ENCODE measurements at regions of chr17 and their contacts with region 1.

Region 1: DNA sequence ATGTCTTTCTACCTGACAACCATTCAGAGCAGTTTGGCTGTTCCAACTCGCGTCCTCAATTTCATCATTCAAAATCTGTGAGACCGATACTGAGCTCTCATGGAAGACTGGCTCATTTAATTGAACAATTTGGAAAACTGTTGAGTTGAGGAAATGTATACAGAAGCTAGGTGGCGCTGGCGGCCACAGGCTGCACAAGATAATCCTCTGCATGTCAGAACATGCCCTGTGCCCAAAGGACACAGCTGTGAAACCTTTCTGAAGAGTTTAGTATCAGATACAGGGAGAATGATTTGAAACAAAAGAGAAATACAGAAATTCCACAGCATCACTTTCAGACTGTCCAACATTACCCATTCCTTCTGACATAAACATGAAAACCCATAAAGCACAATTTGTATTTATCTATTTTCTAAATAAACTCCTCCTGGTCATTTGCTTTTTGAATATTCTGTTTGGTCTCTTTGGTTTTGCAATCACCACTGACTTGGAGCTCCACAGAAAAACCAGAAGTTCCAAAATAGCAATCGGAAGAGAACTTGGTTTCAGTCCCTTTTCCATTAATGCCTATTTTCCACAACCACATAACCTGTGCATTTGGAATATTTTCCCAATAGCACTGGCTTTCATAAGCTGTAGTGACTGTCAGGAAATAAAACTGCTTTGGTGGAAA is 192.8 kb downstream of the MAP2K6 start:
- DNase-seq: peak; percentile 42
- H3K4me3 ChIP-seq: no peak overlapping the region
- CTCF ChIP-seq: peak; percentile 73

Region 2: GRCh38 chr17:69390795-69391501 is 216.3 kb before region 1 on chr17:
- CTCF ChIA-PET with region 1: no interaction called
- POLR2A ChIA-PET with region 1: no interaction called
- DNase-seq: no peak
- H3K4me3 ChIP-seq: no peak overlapping the region
- CTCF ChIP-seq: no peak

Region 3: DNA sequence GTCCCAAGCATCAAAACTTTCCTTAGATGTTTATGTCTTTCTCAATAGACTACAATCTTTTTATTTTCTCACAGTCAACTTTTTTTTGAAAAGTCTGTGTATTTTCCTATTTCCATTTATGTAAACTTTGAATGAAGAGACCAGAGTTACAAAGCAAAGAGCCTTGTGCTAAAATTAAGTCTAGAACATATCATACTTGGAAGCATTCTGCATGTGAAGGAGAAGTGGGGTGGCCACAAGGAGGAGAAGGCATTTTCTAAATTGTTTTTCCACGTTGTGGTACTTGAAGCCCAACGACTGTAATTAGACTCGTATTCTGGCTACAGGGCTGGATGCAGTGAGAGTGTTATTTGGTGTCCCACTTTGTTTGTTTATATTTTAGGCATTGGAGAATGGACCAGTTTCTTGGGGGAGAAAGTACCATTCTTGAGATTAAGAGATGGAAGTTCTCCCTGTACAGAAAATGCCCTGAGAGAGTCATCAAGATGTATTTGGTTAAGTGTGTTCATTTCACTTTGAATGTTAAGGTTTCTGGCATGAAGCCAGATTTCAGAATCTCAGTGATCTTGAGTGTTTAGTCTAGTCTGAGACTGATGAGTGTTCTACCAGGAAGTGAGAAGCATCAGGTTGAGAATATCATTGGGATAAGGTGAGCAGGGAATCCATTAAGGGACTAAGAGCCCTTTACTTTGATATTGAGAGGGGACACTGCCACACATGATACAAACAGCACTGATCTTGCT is 121.2 kb before region 1 on chr17:
- CTCF ChIA-PET with region 1: no interaction called
- POLR2A ChIA-PET with region 1: no interaction called
- DNase-seq: no peak
- H3K4me3 ChIP-seq: no peak overlapping the region
- CTCF ChIP-seq: no peak

Region 4: GRCh38 chr17:69575346-69575761 is 31.9 kb before region 1 on chr17:
- CTCF ChIA-PET with region 1: interaction called, 19 read pairs
- POLR2A ChIA-PET with region 1: interaction called, 3 read pairs
- DNase-seq: peak; percentile 73
- H3K4me3 ChIP-seq: no peak overlapping the region
- CTCF ChIP-seq: no peak

Region 5: DNA sequence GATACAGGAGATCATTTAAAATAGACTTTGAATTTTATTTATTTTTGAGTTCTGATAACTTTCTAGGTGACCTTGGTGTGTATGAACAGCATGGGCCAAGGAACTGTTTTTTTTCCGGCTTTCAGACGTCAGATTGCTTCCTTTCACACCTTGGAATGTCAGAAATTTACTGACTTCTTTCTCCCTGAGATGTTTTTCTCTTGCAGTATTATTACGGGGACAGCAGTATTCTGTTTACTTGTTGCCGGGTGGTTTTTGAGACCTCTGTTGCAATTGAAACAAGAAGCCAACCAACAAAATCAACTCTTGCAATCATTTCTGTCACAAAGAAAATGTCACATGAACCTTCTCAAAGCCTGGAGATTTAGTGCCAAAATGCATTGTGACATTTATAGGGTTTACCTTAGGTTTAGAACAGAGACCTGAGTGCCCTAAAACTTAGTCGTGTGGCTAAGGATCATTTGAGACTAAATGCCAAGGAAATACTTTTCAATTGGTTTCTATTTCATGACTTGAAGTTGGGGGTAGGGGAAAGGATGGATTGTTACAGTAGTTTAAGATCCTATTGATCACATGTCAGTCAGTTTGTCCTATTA is 18.5 kb before region 1 on chr17:
- CTCF ChIA-PET with region 1: interaction called, 129 read pairs
- POLR2A ChIA-PET with region 1: interaction called, 7 read pairs
- DNase-seq: no peak
- H3K4me3 ChIP-seq: no peak overlapping the region
- CTCF ChIP-seq: no peak

Region 6: GRCh38 chr17:69870091-69870530 is 262.8 kb after region 1 on chr17:
- CTCF ChIA-PET with region 1: interaction called, 10 read pairs
- POLR2A ChIA-PET with region 1: interaction called, 4 read pairs
- DNase-seq: no peak
- H3K4me3 ChIP-seq: no peak overlapping the region
- CTCF ChIP-seq: no peak

Region 7: DNA sequence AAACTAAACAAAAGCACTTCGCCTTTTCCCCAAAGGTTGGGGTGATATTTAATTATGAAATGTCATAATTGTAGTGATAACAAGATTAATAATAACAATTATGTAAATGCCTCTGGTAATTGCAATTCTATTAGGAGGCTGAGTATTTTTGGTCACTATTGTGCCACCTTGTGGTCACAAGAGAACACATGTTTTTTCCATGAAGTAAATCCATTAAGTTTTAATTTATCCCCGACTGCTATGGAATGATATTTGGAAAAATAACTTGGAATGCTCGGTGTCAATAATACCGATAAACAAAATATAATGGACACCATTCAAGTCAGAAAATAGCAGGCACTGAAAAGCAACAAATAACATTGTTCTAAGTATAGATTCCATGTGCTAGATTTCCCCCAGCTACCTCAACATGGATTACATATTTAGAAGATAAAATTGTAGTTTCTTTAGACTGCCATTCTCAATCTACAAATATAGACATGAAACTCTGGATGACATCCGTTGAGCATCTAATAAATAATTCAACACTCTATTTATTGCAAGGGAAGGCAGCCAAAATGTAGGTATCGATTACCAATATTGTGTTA is 537.1 kb after region 1 on chr17:
- CTCF ChIA-PET with region 1: interaction called, 114 read pairs
- POLR2A ChIA-PET with region 1: no interaction called
- DNase-seq: no peak
- H3K4me3 ChIP-seq: no peak overlapping the region
- CTCF ChIP-seq: peak; percentile 24

Measured in AG04449 (cell line).